ENCODE measurements at regions of chr2 and their contacts with region 1.

Region 1: DNA sequence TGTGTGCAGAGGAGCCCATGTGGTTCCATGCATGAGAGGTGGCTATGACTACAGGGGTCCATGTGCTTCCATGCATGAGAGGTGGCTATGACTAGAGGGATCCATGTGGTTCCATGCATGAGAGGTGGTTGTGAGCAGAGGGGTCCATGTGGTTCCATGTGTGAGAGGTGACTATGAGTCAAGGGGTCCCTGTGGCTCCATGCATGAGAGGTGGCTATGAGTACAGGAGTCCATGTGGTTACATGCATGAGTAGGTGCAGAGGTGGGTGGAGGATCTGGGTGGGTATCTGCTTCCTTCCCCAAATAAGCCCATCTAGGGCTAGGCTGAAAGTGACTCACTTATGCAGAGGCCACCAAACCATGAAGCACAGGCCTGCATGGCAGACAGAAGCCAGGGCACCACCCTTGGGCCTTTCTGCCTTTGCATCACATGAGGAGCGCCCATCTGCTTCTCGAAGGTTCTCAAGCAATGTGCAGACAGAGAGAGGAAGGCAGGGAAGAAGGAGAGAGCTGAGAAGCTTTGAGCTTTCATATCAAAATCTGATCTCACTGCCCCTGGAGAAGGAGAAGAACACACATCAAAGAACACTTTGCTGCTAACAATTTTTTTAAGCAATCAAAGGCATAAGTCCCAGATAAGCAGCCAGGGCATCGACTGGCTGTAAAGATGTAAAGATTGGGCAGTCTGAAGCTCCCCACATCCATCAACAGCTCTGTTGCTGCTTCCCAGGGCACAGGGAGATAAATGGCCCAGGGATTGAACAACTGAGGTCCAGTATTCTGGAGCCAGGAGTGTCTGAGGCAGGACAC is 137.6 kb downstream of the TNS1 start:
- DNase-seq: peak; percentile 9
- H3K4me3 ChIP-seq: no peak overlapping the region
- H3K27ac ChIP-seq: no peak overlapping the region
- H3K4me1 ChIP-seq: peaks cover 8% of the 10 kb centered on the region
- CTCF ChIP-seq: no peak

Region 2: DNA sequence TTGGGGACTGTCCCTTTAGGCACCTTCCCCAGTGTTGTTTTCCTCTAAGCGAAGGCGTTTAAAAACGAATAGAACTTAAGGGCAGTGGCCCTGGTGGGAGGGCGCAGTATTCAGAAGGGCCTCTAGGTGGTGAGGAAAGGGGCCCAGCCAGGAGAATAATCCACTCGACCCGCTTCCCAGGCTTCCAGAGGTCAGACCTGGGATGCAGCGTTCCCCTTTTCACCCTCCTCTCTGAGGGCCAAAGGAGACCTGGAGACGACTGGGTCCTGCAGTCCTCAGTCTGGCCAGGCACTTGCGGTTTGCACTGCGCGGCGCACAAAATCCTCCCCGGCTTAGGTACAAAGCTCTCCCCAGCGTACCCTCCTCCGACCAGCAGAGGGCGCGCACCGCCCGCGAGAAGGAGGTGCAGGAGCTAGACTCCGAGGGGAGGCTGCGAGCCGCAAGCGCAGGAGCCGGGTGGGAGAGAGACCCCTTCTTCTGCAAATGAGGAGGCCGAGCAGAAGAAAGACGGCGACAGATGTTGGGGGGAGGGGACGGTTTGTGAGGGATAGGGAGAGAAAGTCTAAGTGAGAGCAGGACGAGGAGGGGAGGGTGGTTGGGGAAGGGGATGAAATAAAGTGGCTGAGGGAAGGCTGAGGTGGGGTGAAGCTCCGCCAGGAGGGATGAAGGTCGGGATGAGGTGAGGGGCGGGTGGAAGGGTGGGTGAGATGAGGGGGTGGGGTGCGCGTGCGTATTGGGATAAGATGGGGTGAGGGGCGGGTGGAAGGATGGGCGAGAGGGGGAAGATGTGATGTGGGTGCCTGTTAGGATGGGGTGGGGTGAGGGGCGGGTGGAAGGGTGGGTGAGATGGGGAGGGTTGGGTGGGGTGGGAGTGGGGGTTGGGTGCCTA is 1114.9 kb after region 1 on chr2:
- CTCF ChIA-PET with region 1: interaction called, 11 read pairs
- POLR2A ChIA-PET with region 1: no interaction called
- intact Hi-C with region 1: no loop called
- DNase-seq: peak; percentile 74
- H3K4me3 ChIP-seq: peak overlapping the region; percentile 38
- H3K27ac ChIP-seq: no peak overlapping the region
- H3K4me1 ChIP-seq: no peaks in the 10 kb centered on the region
- CTCF ChIP-seq: peak; percentile 99